Transverse colon (tissue), 4 donors: ENCODE measurements at regions of chr5 and their contacts with region 1.

Region 1: DNA sequence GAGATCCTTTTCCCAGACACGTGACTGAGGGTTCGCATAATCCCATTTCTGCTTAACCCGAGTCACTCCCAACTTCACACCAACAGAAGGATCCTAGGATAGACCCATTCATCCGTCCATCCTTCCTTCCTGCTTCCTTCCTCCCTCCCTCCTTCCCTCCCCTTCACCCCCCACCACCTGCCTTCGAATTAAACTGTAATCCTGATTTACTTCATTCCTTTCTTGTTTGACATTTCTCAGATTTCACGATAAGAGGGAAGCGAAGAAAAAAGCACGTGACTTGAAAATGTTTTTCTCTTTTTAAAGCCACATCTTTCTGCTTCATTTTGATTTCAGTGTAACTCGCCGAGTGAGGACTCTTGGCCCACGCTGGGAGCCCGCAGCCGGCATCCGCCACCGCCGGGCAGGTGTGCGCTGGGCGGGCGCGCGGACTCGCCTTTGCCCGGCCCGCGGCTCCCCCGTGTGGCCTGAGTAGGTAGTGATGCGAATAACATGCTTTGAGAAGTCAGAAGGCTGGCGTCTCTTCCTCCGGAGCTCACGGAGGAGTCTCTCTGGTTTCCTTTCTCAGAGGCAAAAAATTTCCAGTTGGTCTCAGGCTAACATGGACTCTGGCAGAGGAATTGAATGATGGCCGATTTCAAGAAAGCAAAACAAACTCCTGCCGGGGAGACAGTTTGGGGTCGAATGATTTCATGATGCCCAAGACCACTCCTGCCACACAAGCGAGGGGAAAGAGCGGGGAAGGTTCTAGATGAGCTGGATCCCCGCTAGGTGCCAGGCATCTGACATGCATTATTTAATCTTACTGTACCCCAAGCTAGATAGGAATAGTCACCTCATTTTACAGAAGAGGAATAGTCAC is 117.7 kb downstream of the SLC12A2 start:
- DNase-seq: peak; percentile 89
- H3K4me3 ChIP-seq: peak overlapping the region in 1 of 4 donors; percentile 36
- H3K27ac ChIP-seq: no peak overlapping the region
- H3K4me1 ChIP-seq: peaks cover 0 to 20% (median 7%) of the 10 kb centered on the region in 4 donors
- H3K27me3 ChIP-seq: no peaks in the 10 kb centered on the region
- CTCF ChIP-seq: peak; percentile 85 to 91 (median 89)
- EP300 ChIP-seq: no peak
- POLR2A ChIP-seq: no peak

Region 2: GRCh38 chr5:127564002-127564769 is 637.1 kb before region 1 on chr5:
- in situ Hi-C with region 1: loop called in 3 of 4 experiments (anchors 10 kb)
- intact Hi-C with region 1: loop called (anchors 10 kb)
- DNase-seq: peak; percentile 36
- H3K4me3 ChIP-seq: no peak overlapping the region
- H3K27ac ChIP-seq: no peak overlapping the region
- H3K4me1 ChIP-seq: peaks cover 0 to 15% (median 2%) of the 10 kb centered on the region in 4 donors
- H3K27me3 ChIP-seq: no peaks in the 10 kb centered on the region
- CTCF ChIP-seq: peak; percentile 61 to 71 (median 64)
- EP300 ChIP-seq: no peak
- POLR2A ChIP-seq: no peak

Region 3: DNA sequence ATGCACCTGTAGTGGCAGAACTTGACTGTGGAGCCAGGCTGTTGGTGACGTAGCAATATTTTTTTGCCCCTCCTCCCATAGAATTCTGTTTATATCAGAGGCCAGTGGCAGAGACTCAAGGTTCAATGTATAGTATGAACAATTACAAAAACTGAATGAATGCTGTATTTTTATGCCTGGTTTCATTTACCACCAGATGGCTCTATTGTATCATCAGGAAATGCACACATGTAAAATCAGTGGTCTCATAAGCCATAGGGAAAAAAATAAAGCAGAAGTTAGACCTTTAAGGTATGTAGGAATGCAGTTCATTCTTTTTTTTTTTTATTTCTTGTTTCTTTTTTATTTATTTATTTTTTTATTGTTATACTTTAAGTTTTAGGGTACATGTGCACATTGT is 454.5 kb before region 1 on chr5:
- in situ Hi-C with region 1: loop called in 3 of 4 experiments (anchors 10 to 25 kb)
- intact Hi-C with region 1: loop called (anchors 5 kb)
- DNase-seq: no peak
- H3K4me3 ChIP-seq: no peak overlapping the region
- H3K27ac ChIP-seq: no peak overlapping the region
- H3K4me1 ChIP-seq: no peaks in the 10 kb centered on the region
- H3K27me3 ChIP-seq: no peaks in the 10 kb centered on the region
- CTCF ChIP-seq: peak; percentile 39 to 47 (median 43)
- EP300 ChIP-seq: no peak
- POLR2A ChIP-seq: no peak

Region 4: GRCh38 chr5:127766676-127767340 is 434.5 kb before region 1 on chr5:
- in situ Hi-C with region 1: loop called in 2 of 4 experiments (anchors 10 to 25 kb)
- intact Hi-C with region 1: no loop called
- DNase-seq: no peak
- H3K4me3 ChIP-seq: no peak overlapping the region
- H3K27ac ChIP-seq: no peak overlapping the region
- H3K4me1 ChIP-seq: peaks cover 0 to 8% (median 2%) of the 10 kb centered on the region in 4 donors
- H3K27me3 ChIP-seq: no peaks in the 10 kb centered on the region
- CTCF ChIP-seq: no peak
- EP300 ChIP-seq: no peak
- POLR2A ChIP-seq: no peak

Region 5: DNA sequence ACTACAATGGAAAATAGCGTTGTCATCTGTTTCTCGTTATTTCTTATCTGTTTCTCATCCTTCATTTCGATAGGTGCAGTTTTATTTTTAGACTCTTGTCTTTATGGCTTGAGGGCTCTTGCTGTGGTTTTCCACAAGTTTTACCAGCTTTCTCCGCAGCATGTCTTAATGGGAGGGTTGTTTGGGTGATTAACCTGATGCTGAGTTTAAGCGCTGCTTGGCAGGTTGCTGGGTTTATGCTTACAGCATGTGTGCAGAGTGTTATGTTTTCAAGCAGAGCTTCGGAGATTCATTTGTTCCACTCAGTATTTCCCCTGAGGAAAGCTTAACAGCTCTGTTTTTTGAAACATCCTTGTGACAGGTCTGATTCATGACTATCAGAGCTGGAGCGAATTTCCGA is 36.2 kb after region 1 on chr5:
- in situ Hi-C with region 1: no loop called
- intact Hi-C with region 1: no loop called
- DNase-seq: no peak
- H3K4me3 ChIP-seq: no peak overlapping the region
- H3K27ac ChIP-seq: no peak overlapping the region
- H3K4me1 ChIP-seq: no peaks in the 10 kb centered on the region
- H3K27me3 ChIP-seq: no peaks in the 10 kb centered on the region
- CTCF ChIP-seq: no peak
- EP300 ChIP-seq: no peak
- POLR2A ChIP-seq: no peak

Region 6: DNA sequence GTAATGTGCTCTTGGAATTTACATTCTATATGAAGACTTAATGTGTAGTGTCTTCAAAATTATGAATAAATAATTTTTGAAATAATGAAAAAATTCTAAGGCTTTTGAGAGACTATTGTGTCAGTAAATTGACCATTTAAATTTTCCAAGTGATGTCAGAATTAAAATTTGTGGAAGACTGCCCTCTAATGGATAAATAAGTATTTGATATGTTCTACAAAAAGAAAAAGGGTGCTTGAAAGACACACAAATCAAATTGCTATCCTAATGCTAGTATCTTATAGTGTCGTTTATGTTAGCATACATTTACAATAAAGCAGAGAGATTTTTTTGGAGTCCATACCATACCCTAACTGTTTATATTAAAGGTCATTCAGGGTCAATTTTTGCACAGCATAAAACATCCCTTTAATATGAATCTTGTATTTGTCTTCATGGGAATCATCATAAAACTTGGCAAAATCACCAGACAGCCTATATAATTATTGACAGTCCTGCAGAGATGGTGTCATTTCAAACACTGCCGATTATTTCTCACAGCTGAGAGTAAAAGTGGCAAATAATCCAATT is 643.1 kb after region 1 on chr5:
- in situ Hi-C with region 1: loop called in 1 of 4 experiments (anchors 25 kb)
- intact Hi-C with region 1: no loop called
- DNase-seq: no peak
- H3K4me3 ChIP-seq: no peak overlapping the region
- H3K27ac ChIP-seq: no peak overlapping the region
- H3K4me1 ChIP-seq: no peaks in the 10 kb centered on the region
- H3K27me3 ChIP-seq: no peaks in the 10 kb centered on the region
- CTCF ChIP-seq: peak in 3 of 5 experiments; percentile 14 to 25 (median 16)
- EP300 ChIP-seq: no peak
- POLR2A ChIP-seq: no peak